ENCODE measurements at regions of chr1 and their contacts with region 1.

Region 1: DNA sequence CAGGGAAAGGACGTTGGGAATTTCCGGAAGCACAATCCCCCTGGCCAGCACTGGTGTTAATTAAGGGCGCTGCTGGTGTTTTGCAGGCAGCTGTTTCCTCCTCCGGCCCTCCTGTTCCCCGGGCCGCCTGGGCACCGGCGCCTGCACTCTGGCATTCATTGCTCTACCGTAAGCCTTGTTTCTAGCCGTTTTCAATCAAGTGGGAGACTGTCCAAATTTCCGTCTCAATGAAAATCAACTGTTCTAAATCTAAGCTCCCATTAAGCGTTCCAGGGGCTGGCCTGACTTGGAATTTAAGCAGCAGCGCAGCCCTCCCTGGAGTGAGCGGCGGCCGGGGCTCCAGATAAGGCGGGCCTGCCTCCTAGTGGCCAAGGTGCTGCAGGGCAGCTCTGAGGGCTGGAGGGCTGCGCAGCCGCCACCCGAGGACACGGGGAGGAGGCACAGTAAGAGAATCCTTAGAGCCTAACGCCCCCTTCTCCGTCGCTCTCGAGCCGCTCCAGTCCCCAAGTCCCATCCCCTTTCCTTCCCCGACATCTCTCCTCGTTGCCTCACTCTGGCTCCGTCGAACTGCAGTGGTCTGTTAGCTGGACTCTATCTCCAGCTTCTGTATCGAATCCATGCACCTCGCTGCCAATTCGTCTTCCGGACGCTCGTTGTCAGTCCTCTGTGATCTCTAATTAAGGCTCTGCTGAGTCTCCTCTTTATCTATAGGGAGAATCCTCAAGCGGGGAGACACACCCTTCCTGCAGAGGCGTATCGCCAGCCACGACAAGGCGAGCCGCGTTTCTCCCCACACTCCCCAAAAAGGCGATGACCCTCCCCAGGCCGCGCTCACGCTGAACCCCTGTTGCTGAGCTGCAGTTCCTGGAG is 57.8 kb upstream of the LRRC8D start:
- DNase-seq: peak; percentile 90
- ATAC-seq: peak; percentile 100
- H3K4me3 Mint-ChIP-seq: peak overlapping the region; percentile 76
- H3K27ac Mint-ChIP-seq: peak overlapping the region; percentile 82
- H3K4me1 Mint-ChIP-seq: peaks cover 56% of the 10 kb centered on the region
- H3K27me3 Mint-ChIP-seq: no peaks in the 10 kb centered on the region

Region 2: GRCh38 chr1:89519779-89520358 is 243.1 kb before region 1 on chr1:
- CTCF ChIA-PET with region 1: interaction called, 10 read pairs
- POLR2A ChIA-PET with region 1: interaction called, 3 read pairs
- DNase-seq: peak; percentile 62
- ATAC-seq: peak; percentile 38
- H3K4me3 Mint-ChIP-seq: no peak overlapping the region
- H3K27ac Mint-ChIP-seq: no peak overlapping the region
- H3K4me1 Mint-ChIP-seq: peaks cover 14% of the 10 kb centered on the region
- H3K27me3 Mint-ChIP-seq: no peaks in the 10 kb centered on the region

Region 3: GRCh38 chr1:89605692-89606091 is 157.3 kb before region 1 on chr1:
- CTCF ChIA-PET with region 1: interaction called, 54 read pairs
- POLR2A ChIA-PET with region 1: interaction called, 13 read pairs
- DNase-seq: no peak
- ATAC-seq: no peak
- H3K4me3 Mint-ChIP-seq: no peak overlapping the region
- H3K27ac Mint-ChIP-seq: peak overlapping the region; percentile 90
- H3K4me1 Mint-ChIP-seq: peaks cover 90% of the 10 kb centered on the region
- H3K27me3 Mint-ChIP-seq: no peaks in the 10 kb centered on the region

Region 4: GRCh38 chr1:89632657-89633247 is 130.3 kb before region 1 on chr1 and contains the start of gene LRRC8C:
- CTCF ChIA-PET with region 1: interaction called, 220 read pairs
- POLR2A ChIA-PET with region 1: interaction called, 63 read pairs
- DNase-seq: peak; percentile 89
- ATAC-seq: peak; percentile 81
- H3K4me3 Mint-ChIP-seq: peak within 1 kb of the TSS; percentile 89
- H3K27ac Mint-ChIP-seq: peak within 1 kb of the TSS; percentile 95
- H3K4me1 Mint-ChIP-seq: peaks cover 71% of the 10 kb centered on the region
- H3K27me3 Mint-ChIP-seq: no peaks in the 10 kb centered on the region
- total RNA-seq, gene LRRC8C: 32.9 to 35.0 TPM

Region 5: DNA sequence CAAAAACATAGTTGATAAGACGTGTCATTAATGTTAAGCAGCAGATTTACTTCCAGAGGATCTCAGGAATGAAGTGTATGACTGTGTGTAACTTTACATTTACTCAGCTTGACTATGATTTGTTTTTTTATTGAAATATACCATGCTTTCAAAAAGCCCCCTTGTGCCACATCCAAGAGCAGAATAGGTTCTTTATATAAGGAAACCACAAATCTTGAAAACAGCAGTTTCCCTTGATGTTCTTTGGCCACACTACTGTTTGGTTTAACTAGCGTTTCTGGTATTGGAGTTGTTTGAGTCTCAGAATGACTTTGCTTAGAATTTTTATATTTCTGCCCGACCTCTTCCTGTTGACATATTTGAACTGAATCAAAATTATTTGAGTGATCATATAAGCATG is 105.1 kb before region 1 on chr1:
- CTCF ChIA-PET with region 1: interaction called, 25 read pairs
- POLR2A ChIA-PET with region 1: interaction called, 15 read pairs
- DNase-seq: peak; percentile 59
- ATAC-seq: peak; percentile 84
- H3K4me3 Mint-ChIP-seq: peak overlapping the region; percentile 60
- H3K27ac Mint-ChIP-seq: peak overlapping the region; percentile 79
- H3K4me1 Mint-ChIP-seq: peaks cover 92% of the 10 kb centered on the region
- H3K27me3 Mint-ChIP-seq: no peaks in the 10 kb centered on the region

Region 6: DNA sequence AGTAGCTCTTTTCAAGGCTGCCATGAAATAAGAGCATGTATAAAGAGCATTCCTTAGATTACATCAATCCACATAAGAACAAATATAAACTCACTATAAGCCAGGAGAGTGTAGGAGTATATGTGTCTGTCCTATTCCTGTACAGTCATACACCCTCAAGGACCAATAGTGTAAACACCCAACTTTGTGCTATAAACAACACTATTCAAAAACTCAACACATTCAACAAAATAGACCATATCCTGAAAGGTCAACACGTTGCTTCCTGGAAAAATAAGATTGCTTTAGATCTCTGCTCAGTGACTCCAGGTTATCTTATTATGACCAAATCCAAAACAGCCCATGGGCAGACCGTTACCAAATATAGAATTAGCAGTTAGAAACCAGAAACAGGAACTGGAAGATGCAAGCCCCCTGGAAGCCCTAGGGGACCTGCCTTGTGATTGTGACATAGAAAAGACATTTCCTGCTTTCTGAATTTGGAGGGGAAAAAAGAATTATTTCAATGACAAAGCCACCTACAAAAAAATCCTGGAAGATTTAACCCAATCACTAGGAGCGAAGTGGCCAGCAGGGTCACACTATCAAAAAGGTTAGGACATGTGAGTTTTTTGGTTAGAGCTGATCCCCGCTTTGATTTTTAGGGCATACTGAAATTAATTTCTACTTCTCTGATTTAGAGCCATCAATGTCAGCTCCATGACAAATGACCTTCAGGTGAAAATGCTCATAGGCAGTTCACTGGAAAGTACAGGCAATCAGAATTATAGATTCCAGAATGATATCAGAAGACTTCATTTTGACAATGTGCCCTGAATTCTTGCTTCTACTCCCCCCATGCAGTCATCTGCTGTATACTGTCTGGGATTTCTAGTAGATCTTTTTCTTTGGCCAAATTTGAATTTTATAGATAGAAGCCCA is 70.2 kb before region 1 on chr1:
- CTCF ChIA-PET with region 1: interaction called, 50 read pairs
- POLR2A ChIA-PET with region 1: interaction called, 4 read pairs
- DNase-seq: no peak
- ATAC-seq: peak; percentile 45
- H3K4me3 Mint-ChIP-seq: no peak overlapping the region
- H3K27ac Mint-ChIP-seq: peak overlapping the region; percentile 74
- H3K4me1 Mint-ChIP-seq: peaks cover 61% of the 10 kb centered on the region
- H3K27me3 Mint-ChIP-seq: no peaks in the 10 kb centered on the region

Region 7: DNA sequence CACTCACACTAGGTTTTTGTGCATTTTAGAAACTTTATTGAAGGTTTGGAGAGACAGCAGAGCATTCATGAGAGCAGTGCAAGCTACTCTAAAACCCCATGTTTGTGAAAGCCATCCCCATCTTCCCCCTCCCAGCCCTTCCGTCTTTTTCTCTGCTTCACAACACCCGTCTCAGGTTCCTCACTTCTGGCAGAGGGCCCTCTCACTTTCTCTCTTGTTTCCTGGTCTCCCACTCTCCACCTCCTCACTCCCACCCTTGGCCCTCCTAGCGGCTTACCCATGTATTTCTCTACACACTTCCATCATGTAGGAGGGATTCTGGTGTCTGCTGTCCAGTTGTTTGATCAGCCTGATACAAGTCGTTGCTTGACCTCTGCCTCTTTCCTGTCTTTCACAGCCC is 37.4 kb before region 1 on chr1:
- CTCF ChIA-PET with region 1: interaction called, 89 read pairs
- POLR2A ChIA-PET with region 1: interaction called, 15 read pairs
- DNase-seq: no peak
- ATAC-seq: no peak
- H3K4me3 Mint-ChIP-seq: no peak overlapping the region
- H3K27ac Mint-ChIP-seq: peak overlapping the region; percentile 85
- H3K4me1 Mint-ChIP-seq: peaks cover 80% of the 10 kb centered on the region
- H3K27me3 Mint-ChIP-seq: no peaks in the 10 kb centered on the region

Measured in activated CD8-positive, alpha-beta T cell treated with anti-CD3 and anti-CD28 coated beads, Interleukin-2, amount 10 ng/mL, durations not matched to agents 7 days and 5 days (primary cell).